Activated CD4-positive, alpha-beta T cell treated with anti-CD3 and anti-CD28 coated beads for 36 hours (primary cell): ENCODE measurements at regions of chr11 and their contacts with region 1.

Region 1: DNA sequence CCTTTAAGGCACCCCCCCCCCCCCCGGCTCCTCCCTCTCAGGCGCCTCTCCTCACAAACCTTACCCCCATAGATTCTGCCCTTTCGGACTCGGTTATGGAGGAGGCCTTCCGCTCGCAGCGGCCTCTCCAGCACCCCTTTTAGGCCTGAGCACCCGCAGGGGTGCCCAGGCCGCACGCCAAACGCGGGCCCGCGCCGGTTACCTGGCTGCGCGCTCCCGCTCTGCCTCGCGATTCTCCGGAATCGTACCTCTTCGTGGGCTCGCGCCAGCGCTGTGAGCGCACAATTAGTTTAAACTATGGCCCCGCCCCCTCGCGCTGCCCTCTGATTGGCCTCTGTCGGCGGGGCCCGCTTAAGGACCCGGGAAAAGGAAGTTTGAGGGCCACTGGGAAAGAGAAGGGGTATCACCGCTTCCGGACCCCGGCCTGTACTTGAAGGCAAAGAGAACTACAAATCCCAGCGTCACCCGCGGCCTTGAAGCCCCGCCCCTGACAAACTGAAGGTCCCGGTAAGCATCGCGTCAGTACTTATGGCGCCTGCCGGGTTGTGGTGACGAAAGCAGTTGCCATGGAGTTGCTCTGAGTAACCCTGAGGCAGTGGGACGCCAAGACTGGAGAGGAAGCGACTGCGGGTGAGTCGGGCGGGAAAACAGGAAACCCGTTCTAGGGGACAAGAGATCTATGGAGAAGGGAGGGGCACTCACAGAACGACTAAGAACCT is at the starts of genes LRRC51 and NUMA1:
- DNase-seq: peak; percentile 100
- ATAC-seq: peak; percentile 96
- H3K4me3 Mint-ChIP-seq: peak within 1 kb of the TSS; percentile 91
- H3K27ac Mint-ChIP-seq: peak within 1 kb of the TSS; percentile 94
- H3K4me1 Mint-ChIP-seq: peaks cover 37% of the 10 kb centered on the region
- H3K27me3 Mint-ChIP-seq: no peaks in the 10 kb centered on the region
- total RNA-seq, gene LRRC51: 7.7 to 11.6 TPM
- total RNA-seq, gene NUMA1: 154 to 167 TPM

Region 2: DNA sequence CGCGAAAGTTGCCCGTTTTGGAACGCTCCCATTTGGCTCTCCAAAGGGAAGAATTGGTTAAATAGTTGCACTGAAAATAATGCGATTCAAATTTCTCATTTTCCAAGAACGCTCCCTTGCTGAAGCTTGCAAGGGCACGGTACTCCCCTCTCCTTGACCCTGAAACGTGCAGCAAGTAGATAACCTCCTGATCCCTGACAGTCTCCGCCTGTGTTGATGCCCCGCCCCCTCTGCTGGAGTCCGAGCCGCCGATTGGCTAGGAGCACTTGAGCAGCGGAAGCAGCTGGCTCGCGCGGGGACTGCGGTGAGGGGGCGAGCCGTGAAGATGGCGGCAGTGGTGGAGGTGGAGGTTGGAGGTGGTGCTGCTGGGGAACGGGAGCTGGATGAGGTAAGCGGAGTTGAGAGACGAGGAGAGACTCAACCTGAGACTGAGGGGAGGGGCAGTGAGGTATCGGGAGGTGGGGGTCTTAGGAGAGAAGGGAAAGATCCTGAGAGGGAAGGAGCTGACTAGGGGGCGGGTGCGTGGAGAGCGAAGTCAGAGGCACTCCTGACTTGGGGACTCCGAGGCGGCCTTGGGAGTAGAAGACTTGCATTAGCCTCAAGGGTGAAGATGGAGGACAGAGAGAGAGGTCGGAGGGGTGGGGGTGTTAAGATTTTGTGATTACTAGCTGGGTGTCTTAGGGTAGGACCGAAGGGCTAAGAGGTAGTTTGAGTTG is 151.5 kb before region 1 on chr11 and contains the start of gene RNF121:
- CTCF ChIA-PET with region 1: no interaction called
- POLR2A ChIA-PET with region 1: interaction called, 4 read pairs
- intact Hi-C with region 1: loop called in 1 of 2 experiments (anchors 1 kb)
- DNase-seq: peak; percentile 99
- ATAC-seq: peak; percentile 87
- H3K4me3 Mint-ChIP-seq: peak within 1 kb of the TSS; percentile 96
- H3K27ac Mint-ChIP-seq: peak within 1 kb of the TSS; percentile 100
- H3K4me1 Mint-ChIP-seq: peaks cover 50% of the 10 kb centered on the region
- H3K27me3 Mint-ChIP-seq: no peaks in the 10 kb centered on the region
- total RNA-seq, gene RNF121: 28.7 to 29.5 TPM

Region 3: GRCh38 chr11:71999362-71999761 is 81.1 kb before region 1 on chr11:
- CTCF ChIA-PET with region 1: no interaction called
- POLR2A ChIA-PET with region 1: no interaction called
- intact Hi-C with region 1: no loop called
- DNase-seq: no peak
- ATAC-seq: no peak
- H3K4me3 Mint-ChIP-seq: peak overlapping the region; percentile 43
- H3K27ac Mint-ChIP-seq: peak overlapping the region; percentile 90
- H3K4me1 Mint-ChIP-seq: peaks cover 20% of the 10 kb centered on the region
- H3K27me3 Mint-ChIP-seq: no peaks in the 10 kb centered on the region

Region 4: GRCh38 chr11:72091005-72091691 is 10.7 kb after region 1 on chr11:
- CTCF ChIA-PET with region 1: interaction called, 12 read pairs
- POLR2A ChIA-PET with region 1: no interaction called
- intact Hi-C with region 1: no loop called
- DNase-seq: peak; percentile 82
- ATAC-seq: peak; percentile 90
- H3K4me3 Mint-ChIP-seq: no peak overlapping the region
- H3K27ac Mint-ChIP-seq: no peak overlapping the region
- H3K4me1 Mint-ChIP-seq: peaks cover 13% of the 10 kb centered on the region
- H3K27me3 Mint-ChIP-seq: no peaks in the 10 kb centered on the region

Region 5: GRCh38 chr11:72112321-72113219 is 32.2 kb after region 1 on chr11 and contains the start of gene ANAPC15:
- CTCF ChIA-PET with region 1: interaction called, 10 read pairs
- POLR2A ChIA-PET with region 1: interaction called, 8 read pairs
- intact Hi-C with region 1: loop called (anchors 1 kb)
- DNase-seq: peak; percentile 100
- ATAC-seq: peak; percentile 89
- H3K4me3 Mint-ChIP-seq: peak within 1 kb of the TSS; percentile 92
- H3K27ac Mint-ChIP-seq: peak within 1 kb of the TSS; percentile 98
- H3K4me1 Mint-ChIP-seq: peaks cover 16% of the 10 kb centered on the region
- H3K27me3 Mint-ChIP-seq: no peaks in the 10 kb centered on the region
- total RNA-seq, gene ANAPC15: 60.3 to 76.1 TPM

Region 6: DNA sequence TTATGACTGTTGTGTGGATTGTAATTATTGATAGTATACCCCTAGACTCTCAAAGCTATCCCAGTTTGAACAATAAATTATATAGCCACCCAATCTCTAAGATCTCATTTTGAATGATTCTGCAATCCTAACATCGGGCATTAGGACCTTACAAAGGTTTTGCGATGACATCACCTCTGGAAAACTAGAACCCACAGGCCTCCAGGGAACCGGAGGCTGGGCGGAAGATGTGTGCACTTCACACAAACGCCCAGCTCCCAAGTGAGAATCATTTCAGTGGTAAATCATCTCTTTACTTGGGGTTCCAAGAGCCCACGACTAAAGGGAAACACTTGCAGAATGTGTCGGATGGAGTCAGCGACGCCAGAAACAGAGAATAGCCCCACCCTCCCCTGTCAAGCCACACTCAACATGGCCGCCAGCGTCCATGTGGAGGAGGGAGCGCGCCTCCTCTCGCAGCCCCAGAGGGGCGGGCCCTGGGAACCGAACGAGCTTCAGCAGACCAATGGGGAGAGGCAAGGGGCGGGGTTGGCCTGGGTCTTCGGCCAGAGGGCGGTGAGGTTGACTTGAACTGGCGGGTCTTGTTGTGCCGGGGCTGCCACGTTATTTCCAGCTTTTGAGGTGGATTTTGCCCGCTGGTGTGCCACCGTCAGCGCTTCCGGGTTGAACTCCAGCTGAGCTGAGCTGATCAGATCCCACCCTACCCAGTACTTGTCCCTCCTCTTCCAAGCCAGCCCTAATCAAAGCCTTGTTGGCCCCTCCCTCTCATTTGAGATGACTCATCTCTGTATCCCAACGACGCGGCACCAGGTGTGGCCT is 1698.9 kb after region 1 on chr11:
- CTCF ChIA-PET with region 1: no interaction called
- POLR2A ChIA-PET with region 1: no interaction called
- intact Hi-C with region 1: loop called in 1 of 2 experiments (anchors 1 kb)
- DNase-seq: peak; percentile 100
- ATAC-seq: peak; percentile 97
- H3K4me3 Mint-ChIP-seq: peak overlapping the region; percentile 80
- H3K27ac Mint-ChIP-seq: peak overlapping the region; percentile 98
- H3K4me1 Mint-ChIP-seq: peaks cover 10% of the 10 kb centered on the region
- H3K27me3 Mint-ChIP-seq: no peaks in the 10 kb centered on the region